Astrocyte of the cerebellum (primary cell): ENCODE measurements at regions of chr12 and their contacts with region 1.

Region 1: DNA sequence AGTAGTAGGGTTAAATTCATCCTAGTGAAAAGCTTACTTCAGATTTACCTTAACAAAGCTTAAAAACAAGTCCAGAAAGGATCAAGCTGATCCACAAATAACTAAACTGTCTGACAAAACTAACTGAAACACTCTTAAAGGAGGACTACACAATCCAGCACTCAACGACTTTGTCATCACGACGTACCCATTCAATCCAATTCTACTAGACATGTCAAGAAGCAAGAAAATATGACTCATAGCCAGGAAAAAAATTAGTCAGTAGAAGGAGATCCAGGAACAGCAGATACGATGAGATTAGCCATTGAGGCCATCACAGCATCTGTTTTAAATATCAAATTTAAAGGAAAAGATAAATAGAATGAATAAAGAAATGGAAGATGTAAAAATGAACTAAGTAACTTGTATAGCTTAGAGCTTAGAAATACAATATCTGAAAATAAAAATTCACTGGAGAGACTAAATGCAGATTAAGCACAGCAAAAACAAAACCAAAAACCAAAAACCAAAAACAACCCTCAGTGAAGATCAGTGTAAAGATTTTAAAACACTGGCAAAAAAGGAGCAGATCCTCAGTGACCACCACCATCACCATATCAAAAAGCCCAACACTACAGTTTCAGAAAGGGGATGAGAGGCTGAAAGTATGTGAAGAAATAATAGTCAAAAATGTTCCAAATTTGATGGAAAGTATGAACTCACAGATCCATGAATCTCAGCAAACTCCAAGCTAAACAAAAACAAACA is 95.0 kb upstream of the CCND2 start:
- DNase-seq: no peak
- H3K4me3 ChIP-seq: no peak overlapping the region
- CTCF ChIP-seq: no peak

Region 2: DNA sequence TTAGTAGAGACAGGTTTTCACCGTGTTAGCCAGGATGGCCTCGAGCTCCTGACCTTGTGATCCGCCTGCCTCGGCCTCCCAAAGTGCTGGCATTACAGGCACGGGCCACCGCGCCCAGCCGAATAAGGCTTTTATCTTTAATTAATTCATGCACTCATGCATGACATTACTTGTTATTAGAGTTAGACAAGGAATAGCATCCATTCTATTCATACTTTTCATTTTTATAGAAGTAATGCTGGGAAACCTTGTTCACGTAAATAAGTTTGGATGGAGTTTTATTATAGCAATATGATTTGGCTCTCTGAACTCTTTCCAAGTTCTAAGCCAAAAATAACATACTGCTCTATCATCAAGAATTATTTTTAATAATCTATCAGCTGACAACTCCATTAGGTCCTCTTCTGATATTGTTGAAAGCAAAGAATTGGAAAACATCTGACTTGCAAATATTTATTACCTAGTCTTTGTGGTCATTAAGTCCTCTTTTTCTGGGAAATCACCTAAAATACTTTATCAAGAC is 73.8 kb before region 1 on chr12:
- in situ Hi-C with region 1: loop called (anchors 5 kb)
- DNase-seq: no peak
- H3K4me3 ChIP-seq: no peak overlapping the region
- CTCF ChIP-seq: no peak

Region 3: GRCh38 chr12:4214877-4215228 is 36.3 kb after region 1 on chr12:
- in situ Hi-C with region 1: loop called (anchors 5 kb)
- DNase-seq: no peak
- H3K4me3 ChIP-seq: no peak overlapping the region
- CTCF ChIP-seq: no peak